GM12878 (cell line): ENCODE measurements at regions of chr14 and their contacts with region 1.

Region 1: DNA sequence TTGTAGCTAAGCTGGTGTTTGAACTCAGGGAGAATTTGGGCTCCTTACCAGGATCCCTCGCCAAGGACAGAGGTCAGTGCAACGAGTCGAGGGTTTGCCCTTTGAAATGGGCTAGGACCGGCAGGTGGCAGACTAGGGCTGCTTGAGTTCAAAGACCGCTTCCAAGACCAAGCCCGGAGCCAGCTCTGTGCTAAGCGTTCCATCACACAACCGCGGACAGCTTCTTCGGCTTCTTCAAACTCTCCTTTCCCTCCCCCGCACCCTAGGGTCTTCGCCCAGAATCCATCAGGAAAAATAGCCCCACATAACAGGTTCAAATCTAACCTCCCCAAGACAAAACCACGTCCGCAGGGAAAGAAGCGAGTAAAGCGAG is 705 bp upstream of the FLVCR2 start:
- DNase-seq: peak; percentile 34
- ATAC-seq: peak; percentile 97
- H3K4me3 ChIP-seq: peak overlapping the region; percentile 74
- H3K27ac ChIP-seq: peak overlapping the region; percentile 40; the same call in 1 of the 2 replicates
- H3K4me1 ChIP-seq: peaks cover 7% of the 10 kb centered on the region; the same call in 1 of the 2 replicates
- H3K27me3 ChIP-seq: no peaks in the 10 kb centered on the region
- CTCF ChIP-seq: peak; percentile 76 to 84 (median 81)
- EP300 ChIP-seq: no peak
- POLR2A ChIP-seq: no peak
- RAD21 ChIP-seq: peak; percentile 78

Region 2: GRCh38 chr14:75307700-75308379 is 269.9 kb before region 1 on chr14:
- CTCF ChIA-PET with region 1: interaction called, 24 read pairs
- POLR2A ChIA-PET with region 1: no interaction called
- RAD21 ChIA-PET with region 1: interaction called, 3 read pairs
- SMC1A ChIA-PET with region 1: interaction called, 7 read pairs
- in situ Hi-C with region 1: no loop called
- intact Hi-C with region 1: no loop called
- DNase-seq: no peak
- ATAC-seq: peak; percentile 87
- H3K4me3 ChIP-seq: no peak overlapping the region
- H3K27ac ChIP-seq: no peak overlapping the region
- H3K4me1 ChIP-seq: peaks cover 8% of the 10 kb centered on the region
- H3K27me3 ChIP-seq: no peaks in the 10 kb centered on the region
- CTCF ChIP-seq: peak; percentile 87 to 97 (median 88); a peak in 5 of 6 replicates
- EP300 ChIP-seq: no peak
- POLR2A ChIP-seq: no peak
- RAD21 ChIP-seq: peak; percentile 90

Region 3: GRCh38 chr14:75542588-75543091 is 35.1 kb before region 1 on chr14:
- CTCF ChIA-PET with region 1: interaction called, 14 read pairs
- POLR2A ChIA-PET with region 1: interaction called, 4 read pairs
- RAD21 ChIA-PET with region 1: interaction called, 8 read pairs
- SMC1A ChIA-PET with region 1: interaction called, 10 read pairs
- in situ Hi-C with region 1: no loop called
- intact Hi-C with region 1: no loop called
- DNase-seq: no peak
- ATAC-seq: peak; percentile 84
- H3K4me3 ChIP-seq: peak overlapping the region; percentile 52
- H3K27ac ChIP-seq: peak overlapping the region; percentile 96
- H3K4me1 ChIP-seq: peaks cover 60% of the 10 kb centered on the region
- H3K27me3 ChIP-seq: no peaks in the 10 kb centered on the region
- CTCF ChIP-seq: no peak
- EP300 ChIP-seq: no peak
- POLR2A ChIP-seq: peak; percentile 64
- RAD21 ChIP-seq: no peak

Region 4: DNA sequence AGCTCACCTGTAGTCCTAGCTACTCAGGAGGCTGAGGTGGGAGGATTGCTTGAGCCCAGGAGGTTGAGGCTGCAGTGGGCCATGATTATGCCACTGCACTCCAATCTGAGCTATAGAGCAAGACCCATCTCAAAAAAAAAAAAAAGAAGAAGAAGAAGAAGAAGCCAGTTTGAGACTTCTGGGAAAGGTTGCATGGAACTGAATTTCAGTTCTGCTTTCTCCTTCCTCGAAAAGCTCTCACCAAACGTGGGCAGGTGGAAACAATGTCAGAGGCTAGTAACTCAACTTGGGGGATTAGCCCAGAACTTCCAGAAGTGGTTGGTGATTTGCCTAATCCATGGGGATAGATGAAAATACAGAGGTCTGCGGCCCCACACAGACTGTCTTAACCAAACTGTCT is 19.4 kb after region 1 on chr14:
- CTCF ChIA-PET with region 1: interaction called, 11 read pairs
- POLR2A ChIA-PET with region 1: no interaction called
- RAD21 ChIA-PET with region 1: interaction called, 16 read pairs
- SMC1A ChIA-PET with region 1: interaction called, 4 read pairs
- in situ Hi-C with region 1: no loop called
- intact Hi-C with region 1: no loop called
- DNase-seq: no peak
- ATAC-seq: no peak
- H3K4me3 ChIP-seq: no peak overlapping the region
- H3K27ac ChIP-seq: no peak overlapping the region
- H3K4me1 ChIP-seq: no peaks in the 10 kb centered on the region
- H3K27me3 ChIP-seq: no peaks in the 10 kb centered on the region
- CTCF ChIP-seq: no peak
- EP300 ChIP-seq: no peak
- POLR2A ChIP-seq: no peak
- RAD21 ChIP-seq: no peak

Region 5: GRCh38 chr14:75647650-75648049 is 69.9 kb after region 1 on chr14:
- CTCF ChIA-PET with region 1: interaction called, 578 read pairs
- POLR2A ChIA-PET with region 1: interaction called, 9 read pairs
- RAD21 ChIA-PET with region 1: interaction called, 320 read pairs
- SMC1A ChIA-PET with region 1: interaction called, 375 read pairs
- in situ Hi-C with region 1: loop called (anchors 5 kb)
- intact Hi-C with region 1: no loop called
- DNase-seq: no peak
- ATAC-seq: no peak
- H3K4me3 ChIP-seq: no peak overlapping the region
- H3K27ac ChIP-seq: no peak overlapping the region
- H3K4me1 ChIP-seq: no peaks in the 10 kb centered on the region
- H3K27me3 ChIP-seq: no peaks in the 10 kb centered on the region
- CTCF ChIP-seq: no peak
- EP300 ChIP-seq: no peak
- POLR2A ChIP-seq: no peak
- RAD21 ChIP-seq: no peak

Region 6: GRCh38 chr14:75794615-75795038 is 216.9 kb after region 1 on chr14:
- CTCF ChIA-PET with region 1: interaction called, 11 read pairs
- POLR2A ChIA-PET with region 1: no interaction called
- RAD21 ChIA-PET with region 1: no interaction called
- SMC1A ChIA-PET with region 1: interaction called, 4 read pairs
- in situ Hi-C with region 1: no loop called
- intact Hi-C with region 1: no loop called
- DNase-seq: no peak
- ATAC-seq: peak; percentile 40; the same call in 2 of the 3 replicates
- H3K4me3 ChIP-seq: no peak overlapping the region
- H3K27ac ChIP-seq: no peak overlapping the region
- H3K4me1 ChIP-seq: no peaks in the 10 kb centered on the region
- H3K27me3 ChIP-seq: no peaks in the 10 kb centered on the region
- CTCF ChIP-seq: peak in 2 of 3 experiments; percentile 17 to 37; a peak in 2 of 6 replicates
- EP300 ChIP-seq: no peak
- POLR2A ChIP-seq: no peak
- RAD21 ChIP-seq: no peak

Region 7: GRCh38 chr14:75861161-75861621 is 283.5 kb after region 1 on chr14:
- CTCF ChIA-PET with region 1: no interaction called
- POLR2A ChIA-PET with region 1: no interaction called
- RAD21 ChIA-PET with region 1: no interaction called
- SMC1A ChIA-PET with region 1: no interaction called
- in situ Hi-C with region 1: no loop called
- intact Hi-C with region 1: no loop called
- DNase-seq: no peak
- ATAC-seq: no peak
- H3K4me3 ChIP-seq: no peak overlapping the region
- H3K27ac ChIP-seq: no peak overlapping the region
- H3K4me1 ChIP-seq: no peaks in the 10 kb centered on the region
- H3K27me3 ChIP-seq: no peaks in the 10 kb centered on the region
- CTCF ChIP-seq: no peak
- EP300 ChIP-seq: no peak
- POLR2A ChIP-seq: no peak
- RAD21 ChIP-seq: no peak

Region 8: DNA sequence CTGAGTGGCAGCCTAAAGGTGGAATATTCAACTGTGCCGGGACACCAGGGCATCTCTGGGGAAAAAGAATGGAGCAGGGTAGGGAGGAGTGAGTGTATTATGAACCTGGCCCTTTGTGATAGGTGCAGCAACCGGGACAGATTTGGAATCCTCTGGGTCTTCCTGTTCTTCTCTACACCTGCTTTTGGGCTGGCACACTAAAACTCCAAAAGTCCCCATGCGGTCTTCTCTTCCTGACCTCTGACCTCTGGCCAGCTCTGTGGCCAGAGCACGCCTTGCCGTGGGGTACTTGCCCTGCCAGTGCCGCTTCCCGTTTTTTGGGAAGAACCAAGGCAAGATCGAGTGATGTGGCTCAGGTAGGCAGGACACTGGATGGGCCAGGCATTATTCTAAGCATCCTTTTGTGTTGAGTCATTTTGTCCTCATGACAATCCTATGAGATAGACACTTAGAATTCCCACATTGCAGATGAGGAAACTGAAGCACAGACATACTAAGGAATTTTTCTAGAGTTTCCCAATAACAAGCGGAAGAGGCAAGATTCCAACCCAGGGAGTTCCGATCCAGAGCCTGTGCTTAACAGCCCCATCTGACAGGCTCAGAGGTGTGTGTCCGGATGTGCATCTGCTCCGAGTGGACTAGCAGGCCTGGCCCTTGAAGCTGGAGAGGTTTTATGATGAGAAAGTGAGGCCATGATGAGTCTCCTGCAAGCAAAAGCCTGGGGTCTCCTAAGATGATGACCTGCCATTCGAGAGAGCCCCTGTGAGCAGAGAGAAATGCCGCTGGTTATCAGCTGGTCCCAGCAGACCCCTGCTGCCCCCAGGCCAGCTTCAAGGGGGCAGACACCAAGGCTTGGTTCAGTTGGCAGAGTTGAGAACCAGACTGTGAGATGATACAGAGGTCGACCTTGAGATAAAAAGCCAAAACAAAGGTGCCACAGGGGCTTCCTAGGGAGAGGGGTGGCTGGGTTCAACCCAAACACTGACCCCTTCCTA is 730.4 kb after region 1 on chr14:
- CTCF ChIA-PET with region 1: no interaction called
- POLR2A ChIA-PET with region 1: no interaction called
- RAD21 ChIA-PET with region 1: no interaction called
- SMC1A ChIA-PET with region 1: no interaction called
- in situ Hi-C with region 1: no loop called
- intact Hi-C with region 1: no loop called
- DNase-seq: no peak
- ATAC-seq: no peak
- H3K4me3 ChIP-seq: no peak overlapping the region
- H3K27ac ChIP-seq: no peak overlapping the region
- H3K4me1 ChIP-seq: no peaks in the 10 kb centered on the region
- H3K27me3 ChIP-seq: no peaks in the 10 kb centered on the region; a peak in 1 of 4 replicates
- CTCF ChIP-seq: no peak
- EP300 ChIP-seq: no peak
- POLR2A ChIP-seq: no peak
- RAD21 ChIP-seq: no peak